ENCODE measurements at regions of chr7 and their contacts with region 1.

Region 1: GRCh38 chr7:151754142-151754590 is 122.7 kb downstream of the PRKAG2 start:
- DNase-seq: peak; percentile 94
- H3K4me3 ChIP-seq: no peak overlapping the region
- H3K27ac ChIP-seq: peak overlapping the region; percentile 31
- H3K4me1 ChIP-seq: peaks cover 27% of the 10 kb centered on the region
- H3K27me3 ChIP-seq: no peaks in the 10 kb centered on the region
- CTCF ChIP-seq: peak; percentile 98 to 99

Region 2: DNA sequence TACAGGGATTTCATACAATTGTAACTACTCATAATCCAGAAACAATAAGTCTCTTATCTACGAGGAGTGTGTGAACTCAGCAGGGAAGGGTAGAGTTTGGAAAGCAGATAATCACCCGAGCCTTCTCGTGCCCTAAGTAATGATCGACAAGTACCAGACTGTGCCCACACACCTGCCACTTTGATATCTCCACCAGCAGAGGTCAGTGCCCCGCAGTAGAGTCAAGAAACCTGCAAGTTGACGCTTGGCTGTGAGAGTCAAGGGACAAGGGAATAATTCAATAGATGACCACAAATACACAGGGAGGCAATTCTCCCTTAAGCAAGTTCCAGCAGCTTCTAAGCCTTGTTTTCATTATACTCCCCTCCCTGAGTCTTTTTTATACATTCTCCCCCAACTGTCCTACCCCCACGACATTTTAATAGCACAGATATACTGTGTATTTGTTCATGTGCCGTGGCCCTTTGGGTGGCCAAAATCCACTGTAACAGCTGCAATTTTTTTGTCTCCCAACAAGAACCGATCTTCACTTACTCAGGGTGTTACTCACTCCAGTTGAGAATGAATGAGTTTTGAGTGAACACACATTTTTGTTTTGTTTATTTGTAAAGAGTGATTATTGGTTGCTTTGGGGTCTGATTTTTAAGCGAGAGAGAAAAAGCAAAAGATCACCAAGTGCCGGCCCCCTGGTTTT is 127.6 kb before region 1 on chr7:
- CTCF ChIA-PET with region 1: interaction called, 9 read pairs
- dilution Hi-C with region 1: no loop called
- in situ Hi-C with region 1: loop called in 1 of 2 experiments (anchors 5 kb)
- intact Hi-C with region 1: loop called (anchors 1 kb)
- DNase-seq: peak; percentile 48
- H3K4me3 ChIP-seq: no peak overlapping the region
- H3K27ac ChIP-seq: no peak overlapping the region
- H3K4me1 ChIP-seq: peaks cover 35% of the 10 kb centered on the region
- H3K27me3 ChIP-seq: no peaks in the 10 kb centered on the region
- CTCF ChIP-seq: peak; percentile 50 to 87

Region 3: DNA sequence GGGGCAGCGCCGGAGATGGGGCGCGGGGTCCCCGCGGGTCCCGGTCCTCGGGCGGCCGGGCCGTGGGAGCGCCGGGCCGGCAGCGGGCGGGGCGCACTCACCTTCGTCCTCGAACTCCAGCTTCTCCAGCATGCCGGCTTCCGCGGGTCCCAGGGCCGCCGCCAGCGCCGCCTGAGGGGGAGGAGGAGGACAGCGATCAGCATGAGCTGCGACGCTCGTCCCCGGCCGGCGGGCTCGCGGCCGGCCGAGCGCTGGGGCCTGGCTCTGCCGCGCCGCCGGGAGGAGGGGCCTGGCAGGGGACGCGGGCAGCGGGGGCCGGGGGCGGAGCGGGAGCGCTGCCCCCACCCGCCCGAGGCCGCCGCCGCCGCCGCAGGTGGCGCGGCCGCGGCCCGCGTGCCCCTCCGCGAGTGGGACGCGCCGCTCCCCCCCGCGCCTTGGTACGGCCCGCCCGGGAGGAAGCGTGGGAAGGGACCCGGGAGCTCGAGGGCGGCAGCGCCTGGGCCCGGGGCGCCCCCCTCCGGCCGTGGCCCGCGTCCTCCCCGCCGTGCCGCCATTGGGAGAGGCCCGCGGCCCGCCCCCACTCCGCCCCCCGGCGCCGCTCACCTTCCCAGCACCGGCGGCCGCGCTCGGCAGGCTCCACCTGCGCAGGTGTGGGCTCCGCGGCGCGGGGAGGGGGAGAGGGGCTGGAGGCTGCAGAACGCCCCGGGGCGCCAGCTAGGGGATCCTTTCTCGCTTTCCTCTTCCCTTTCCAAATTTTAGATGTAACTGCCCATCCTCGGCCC is 122.0 kb before region 1 on chr7:
- CTCF ChIA-PET with region 1: no interaction called
- dilution Hi-C with region 1: no loop called
- in situ Hi-C with region 1: loop called in 1 of 2 experiments (anchors 5 kb)
- intact Hi-C with region 1: loop called (anchors 1 kb)
- DNase-seq: peak; percentile 78
- H3K4me3 ChIP-seq: peak overlapping the region; percentile 79 to 92 (median 87)
- H3K27ac ChIP-seq: peak overlapping the region; percentile 61
- H3K4me1 ChIP-seq: peaks cover 26% of the 10 kb centered on the region
- H3K27me3 ChIP-seq: no peaks in the 10 kb centered on the region
- CTCF ChIP-seq: peak; percentile 15 to 16

Region 4: GRCh38 chr7:151727579-151728285 is 26.4 kb before region 1 on chr7:
- CTCF ChIA-PET with region 1: no interaction called
- dilution Hi-C with region 1: no loop called
- in situ Hi-C with region 1: no loop called
- intact Hi-C with region 1: loop called (anchors 2 kb)
- DNase-seq: peak; percentile 98
- H3K4me3 ChIP-seq: peak overlapping the region in 1 of 3 experiments; percentile 22
- H3K27ac ChIP-seq: peak overlapping the region; percentile 45
- H3K4me1 ChIP-seq: peaks cover 13% of the 10 kb centered on the region
- H3K27me3 ChIP-seq: no peaks in the 10 kb centered on the region
- CTCF ChIP-seq: no peak